ENCODE measurements at regions of chr2 and their contacts with region 1.

Region 1: DNA sequence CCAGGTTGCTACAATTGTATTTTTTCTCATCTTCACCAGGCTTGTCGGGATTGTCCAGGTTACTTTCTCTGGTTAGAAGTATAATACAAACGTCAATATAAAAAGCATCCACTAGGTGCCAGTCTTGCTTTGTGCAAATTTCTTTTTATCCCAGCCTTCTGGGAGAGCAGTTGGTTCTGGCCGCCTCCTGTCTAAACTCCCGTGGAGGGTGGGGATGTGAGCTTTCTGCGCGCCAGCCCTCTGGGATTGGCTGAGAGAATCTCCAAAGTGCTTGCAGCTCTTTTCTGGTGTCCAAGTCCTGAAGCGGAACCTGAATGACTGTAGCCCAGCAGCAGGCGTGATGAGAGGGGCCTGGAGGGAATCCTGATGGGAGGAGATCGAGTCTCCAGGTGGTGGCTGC is 22.4 kb upstream of the TOGARAM2 start:
- DNase-seq: peak; percentile 90

Region 2: GRCh38 chr2:28880193-28880592 is 78.5 kb before region 1 on chr2:
- in situ Hi-C with region 1: no loop called
- DNase-seq: no peak

Region 3: DNA sequence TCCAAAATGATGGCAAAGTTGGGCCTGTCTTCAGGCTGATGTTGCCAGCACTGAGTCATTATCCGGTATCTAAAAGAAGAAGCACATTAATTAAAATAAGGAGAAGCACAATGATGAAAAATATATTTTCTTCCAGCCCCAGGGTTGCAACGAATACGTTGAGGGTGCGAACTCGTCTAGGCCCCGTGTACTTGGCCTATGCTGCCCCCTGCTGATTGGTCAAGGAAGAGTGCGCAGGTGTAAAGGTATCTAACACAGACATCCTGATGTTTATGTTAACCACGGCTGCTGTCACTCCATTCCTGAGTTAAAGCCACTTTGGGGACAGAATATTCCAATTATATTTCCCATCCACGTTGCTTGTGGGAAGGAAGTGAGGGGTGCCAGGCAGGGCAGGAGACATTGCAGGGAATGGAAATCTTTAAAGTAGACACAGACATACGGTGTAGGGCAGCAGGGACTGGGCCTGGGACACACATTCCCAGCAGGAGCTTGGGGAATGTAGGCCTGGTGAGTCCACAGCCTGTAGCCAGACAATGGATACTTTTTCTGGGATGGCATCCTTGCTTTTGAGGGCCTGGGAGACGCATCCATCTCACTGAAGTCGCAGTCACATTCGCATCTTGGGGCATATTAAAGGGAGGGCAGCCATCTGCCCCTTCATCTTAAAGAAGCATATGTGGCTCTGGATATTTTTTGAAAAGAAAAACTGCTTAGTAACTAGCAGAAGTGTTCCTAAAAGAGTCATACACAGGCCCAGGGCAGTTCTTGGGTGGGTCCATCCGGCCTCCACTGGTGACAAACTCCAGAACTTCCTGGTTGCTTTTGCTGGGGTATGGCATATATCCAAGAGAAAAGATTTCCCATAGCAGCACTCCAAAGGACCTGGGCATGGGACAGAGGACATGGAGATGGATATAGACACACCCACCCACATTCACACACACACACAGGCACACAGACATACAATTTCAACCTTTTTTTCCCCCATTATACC is 238.4 kb after region 1 on chr2:
- in situ Hi-C with region 1: loop called (anchors 10 kb)
- DNase-seq: peak; percentile 78